K562 (cell line): ENCODE measurements at regions of chr1 and their contacts with region 1.

Region 1: DNA sequence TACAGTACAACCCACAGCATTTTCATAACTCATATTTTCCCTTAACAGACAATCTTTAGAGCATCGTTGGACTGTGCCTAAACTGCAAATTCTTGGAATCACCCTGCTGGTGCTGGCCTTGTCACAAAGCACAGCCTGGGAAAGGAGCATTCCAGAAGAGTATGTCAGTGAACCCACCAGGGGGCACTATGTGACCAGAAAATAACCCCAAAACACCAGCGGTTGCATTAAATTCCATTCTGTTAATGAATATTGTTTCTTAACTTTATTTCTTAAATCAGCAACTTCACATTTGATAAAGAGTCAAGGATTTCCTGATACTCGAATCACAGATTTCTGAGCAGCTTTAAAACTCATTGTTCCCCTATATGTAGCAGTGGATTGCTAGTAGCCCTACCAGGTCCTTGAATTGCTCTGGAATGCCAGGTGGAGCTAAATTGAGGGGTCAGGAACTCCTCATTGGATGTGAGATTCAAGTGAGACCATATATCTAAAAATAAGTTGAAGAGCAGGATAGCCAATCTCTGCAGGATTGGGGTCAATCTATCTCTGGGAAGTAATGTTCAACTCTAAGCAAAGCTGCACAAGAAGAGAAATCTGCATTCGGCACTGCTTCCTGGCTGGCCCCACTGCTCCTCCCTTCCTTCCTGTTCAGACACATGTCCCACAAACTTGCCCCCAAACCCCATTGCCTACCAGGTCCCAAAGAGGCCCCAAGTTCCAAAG is 12.7 kb upstream of the RAB4A start:
- DNase-seq: peak; percentile 67 to 81 (median 74)
- ATAC-seq: peak; percentile 93
- H3K4me3 ChIP-seq: no peak overlapping the region
- H3K27ac ChIP-seq: no peak overlapping the region
- H3K4me1 ChIP-seq: peaks cover 0 to 5% of the 10 kb centered on the region in 2 experiments; a peak in 2 of 5 replicates
- H3K27me3 ChIP-seq: peaks cover 0 to 3% of the 10 kb centered on the region in 2 experiments; a peak in 1 of 5 replicates
- CTCF ChIP-seq: peak; percentile 78 to 97 (median 89)
- EP300 ChIP-seq: no peak
- POLR2A ChIP-seq: no peak
- RAD21 ChIP-seq: peak; percentile 97 to 98

Region 2: GRCh38 chr1:229087339-229087738 is 170.9 kb before region 1 on chr1:
- CTCF ChIA-PET with region 1: no interaction called
- POLR2A ChIA-PET with region 1: no interaction called
- in situ Hi-C with region 1: no loop called
- intact Hi-C with region 1: no loop called
- DNase-seq: no peak
- ATAC-seq: no peak
- H3K4me3 ChIP-seq: no peak overlapping the region
- H3K27ac ChIP-seq: no peak overlapping the region
- H3K4me1 ChIP-seq: no peaks in the 10 kb centered on the region; a peak in 1 of 5 replicates
- H3K27me3 ChIP-seq: peaks cover 0 to 25% of the 10 kb centered on the region in 2 experiments; a peak in 3 of 5 replicates
- CTCF ChIP-seq: no peak
- EP300 ChIP-seq: no peak
- POLR2A ChIP-seq: no peak
- RAD21 ChIP-seq: no peak

Region 3: DNA sequence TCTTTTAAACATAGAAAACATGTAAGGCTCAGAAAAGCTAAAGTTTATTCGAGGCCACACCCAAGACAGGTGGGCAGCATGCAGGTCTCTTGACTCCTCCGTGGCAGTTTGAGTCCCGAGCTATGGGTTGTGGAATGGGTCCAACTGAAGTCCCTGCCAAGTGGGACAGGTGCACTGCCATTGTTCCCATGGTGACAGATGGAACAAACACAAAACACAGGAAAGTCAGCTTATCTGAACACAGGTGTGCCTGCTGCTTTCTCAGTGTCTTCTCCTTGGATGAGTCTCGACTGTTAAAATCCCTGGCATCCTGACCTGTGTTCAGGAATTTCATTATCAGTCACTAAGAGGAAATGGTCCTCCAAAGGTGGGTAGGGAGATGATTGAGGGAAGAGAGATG is 86.3 kb before region 1 on chr1:
- CTCF ChIA-PET with region 1: no interaction called
- POLR2A ChIA-PET with region 1: no interaction called
- in situ Hi-C with region 1: no loop called
- intact Hi-C with region 1: no loop called
- DNase-seq: no peak
- ATAC-seq: no peak
- H3K4me3 ChIP-seq: no peak overlapping the region
- H3K27ac ChIP-seq: no peak overlapping the region
- H3K4me1 ChIP-seq: no peaks in the 10 kb centered on the region
- H3K27me3 ChIP-seq: peaks cover 26 to 39% of the 10 kb centered on the region in 2 experiments
- CTCF ChIP-seq: no peak
- EP300 ChIP-seq: no peak
- POLR2A ChIP-seq: no peak
- RAD21 ChIP-seq: no peak

Region 4: DNA sequence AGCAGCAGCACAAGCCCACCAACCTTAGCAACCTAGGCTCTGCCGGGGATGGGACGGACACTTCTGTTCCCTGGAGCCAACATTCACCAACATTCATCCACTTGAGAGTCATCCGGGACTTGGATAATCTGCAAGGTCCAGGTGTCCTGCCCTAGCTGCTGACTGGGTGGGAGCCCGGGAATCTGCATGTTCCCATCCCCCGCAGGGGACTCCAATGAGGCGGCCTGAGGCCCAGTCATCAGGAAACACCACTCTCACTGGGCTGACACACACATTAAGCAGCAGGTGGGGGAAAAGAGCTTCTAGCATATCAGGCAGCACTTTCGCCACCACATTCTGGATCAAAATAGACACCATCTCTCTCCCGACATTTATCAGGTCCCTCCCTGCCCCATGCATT is 123.0 kb after region 1 on chr1:
- CTCF ChIA-PET with region 1: no interaction called
- POLR2A ChIA-PET with region 1: no interaction called
- in situ Hi-C with region 1: no loop called
- intact Hi-C with region 1: loop called (anchors 5 kb)
- DNase-seq: peak in 1 of 4 experiments; percentile 29
- ATAC-seq: peak; percentile 74
- H3K4me3 ChIP-seq: no peak overlapping the region
- H3K27ac ChIP-seq: no peak overlapping the region
- H3K4me1 ChIP-seq: peaks cover 0 to 3% of the 10 kb centered on the region in 2 experiments; a peak in 1 of 5 replicates
- H3K27me3 ChIP-seq: peaks cover 73 to 79% of the 10 kb centered on the region in 2 experiments
- CTCF ChIP-seq: peak in 1 of 3 experiments; percentile 21; a peak in 1 of 6 replicates
- EP300 ChIP-seq: no peak
- POLR2A ChIP-seq: no peak
- RAD21 ChIP-seq: peak in 1 of 2 experiments; percentile 34; a peak in 2 of 4 replicates

Region 5: DNA sequence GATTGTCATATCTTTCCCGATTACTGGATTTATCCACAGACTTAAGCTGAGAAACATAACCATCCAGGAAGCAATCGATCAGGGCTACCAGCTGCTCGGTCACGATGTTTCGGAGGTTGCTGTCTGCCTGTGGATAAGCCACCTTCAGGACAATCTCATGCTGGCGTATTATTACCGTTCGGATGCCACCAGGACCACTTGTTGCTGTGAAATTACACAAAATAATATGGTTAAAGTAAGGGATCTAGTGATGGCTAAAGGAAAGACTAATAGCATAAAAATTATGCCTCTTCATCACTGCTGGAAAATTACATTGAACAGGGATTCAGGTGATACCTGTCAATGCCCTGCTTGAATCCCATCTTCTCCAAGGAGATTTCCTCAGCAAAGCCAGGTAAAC is 206.5 kb after region 1 on chr1:
- CTCF ChIA-PET with region 1: interaction called, 3 read pairs
- POLR2A ChIA-PET with region 1: no interaction called
- in situ Hi-C with region 1: no loop called
- intact Hi-C with region 1: loop called (anchors 5 kb)
- DNase-seq: no peak
- ATAC-seq: no peak
- H3K4me3 ChIP-seq: no peak overlapping the region
- H3K27ac ChIP-seq: no peak overlapping the region
- H3K4me1 ChIP-seq: no peaks in the 10 kb centered on the region
- H3K27me3 ChIP-seq: no peaks in the 10 kb centered on the region
- CTCF ChIP-seq: no peak
- EP300 ChIP-seq: no peak
- POLR2A ChIP-seq: no peak
- RAD21 ChIP-seq: no peak

Region 6: GRCh38 chr1:229514578-229515275 is 256.5 kb after region 1 on chr1:
- CTCF ChIA-PET with region 1: interaction called, 43 read pairs
- POLR2A ChIA-PET with region 1: no interaction called
- in situ Hi-C with region 1: no loop called
- intact Hi-C with region 1: loop called (anchors 1 kb)
- DNase-seq: peak; percentile 57 to 85 (median 70)
- ATAC-seq: peak; percentile 98
- H3K4me3 ChIP-seq: no peak overlapping the region
- H3K27ac ChIP-seq: no peak overlapping the region
- H3K4me1 ChIP-seq: peaks cover 0 to 6% of the 10 kb centered on the region in 2 experiments; a peak in 2 of 5 replicates
- H3K27me3 ChIP-seq: no peaks in the 10 kb centered on the region
- CTCF ChIP-seq: peak; percentile 81 to 94 (median 91)
- EP300 ChIP-seq: 0 out of 2 replicates have a peak, but pooled peaks have one; percentile 11
- POLR2A ChIP-seq: no peak
- RAD21 ChIP-seq: peak; percentile 77 to 86

Region 7: GRCh38 chr1:229756666-229757065 is 498.5 kb after region 1 on chr1:
- CTCF ChIA-PET with region 1: no interaction called
- POLR2A ChIA-PET with region 1: no interaction called
- in situ Hi-C with region 1: no loop called
- intact Hi-C with region 1: no loop called
- DNase-seq: peak in 1 of 4 experiments; percentile 15
- ATAC-seq: no peak
- H3K4me3 ChIP-seq: no peak overlapping the region
- H3K27ac ChIP-seq: no peak overlapping the region
- H3K4me1 ChIP-seq: peaks cover 15 to 22% of the 10 kb centered on the region in 2 experiments; a peak in 4 of 5 replicates
- H3K27me3 ChIP-seq: peaks cover 0 to 25% of the 10 kb centered on the region in 2 experiments; a peak in 2 of 5 replicates
- CTCF ChIP-seq: no peak
- EP300 ChIP-seq: no peak
- POLR2A ChIP-seq: no peak
- RAD21 ChIP-seq: no peak

Region 8: DNA sequence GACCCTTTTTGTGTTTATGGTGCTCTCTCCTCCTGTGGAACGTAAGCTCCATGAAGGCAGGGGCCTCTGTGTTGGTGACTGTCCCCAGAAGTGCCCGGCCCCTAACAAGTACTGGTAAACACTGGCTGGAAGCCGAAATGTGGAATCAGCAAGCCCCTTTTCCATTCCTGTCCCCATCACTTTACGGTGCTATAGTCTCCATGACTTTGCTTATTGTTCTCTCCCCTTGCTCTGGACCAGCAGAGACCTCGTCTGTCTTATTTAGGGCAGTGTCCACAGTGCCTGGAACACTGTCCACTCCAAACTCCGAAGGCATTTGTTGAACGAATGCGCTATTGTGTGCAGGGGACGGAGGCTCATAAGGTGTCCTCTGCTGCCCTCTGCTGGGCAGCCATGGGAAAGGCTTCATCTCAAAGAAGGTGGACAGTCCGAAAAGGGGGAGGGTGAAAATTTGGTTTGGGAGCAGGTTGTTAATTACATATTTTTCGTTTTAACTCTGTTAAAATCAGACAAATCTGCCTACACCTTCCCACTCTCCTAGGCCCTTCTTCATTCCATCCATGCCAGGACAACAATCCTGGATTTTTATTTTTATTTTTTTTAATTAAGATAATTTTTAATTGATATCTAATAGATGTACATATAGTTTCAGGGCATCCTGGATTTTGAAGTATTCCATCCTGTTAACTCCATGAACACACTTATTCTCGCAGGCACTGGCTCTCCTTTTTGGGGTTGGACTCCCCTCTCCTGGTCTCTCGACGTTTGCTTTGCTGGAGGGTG is 1052.4 kb after region 1 on chr1:
- CTCF ChIA-PET with region 1: interaction called, 14 read pairs
- POLR2A ChIA-PET with region 1: no interaction called
- in situ Hi-C with region 1: loop called (anchors 10 kb)
- intact Hi-C with region 1: loop called (anchors 1 kb)
- DNase-seq: peak; percentile 88 to 92 (median 90)
- ATAC-seq: peak; percentile 95
- H3K4me3 ChIP-seq: no peak overlapping the region
- H3K27ac ChIP-seq: no peak overlapping the region
- H3K4me1 ChIP-seq: no peaks in the 10 kb centered on the region
- H3K27me3 ChIP-seq: peaks cover 30 to 49% of the 10 kb centered on the region in 2 experiments
- CTCF ChIP-seq: peak; percentile 87 to 97 (median 95)
- EP300 ChIP-seq: no peak
- POLR2A ChIP-seq: no peak
- RAD21 ChIP-seq: peak; percentile 98